AG04450 (cell line): ENCODE measurements at regions of chr1 and their contacts with region 1.

Region 1: DNA sequence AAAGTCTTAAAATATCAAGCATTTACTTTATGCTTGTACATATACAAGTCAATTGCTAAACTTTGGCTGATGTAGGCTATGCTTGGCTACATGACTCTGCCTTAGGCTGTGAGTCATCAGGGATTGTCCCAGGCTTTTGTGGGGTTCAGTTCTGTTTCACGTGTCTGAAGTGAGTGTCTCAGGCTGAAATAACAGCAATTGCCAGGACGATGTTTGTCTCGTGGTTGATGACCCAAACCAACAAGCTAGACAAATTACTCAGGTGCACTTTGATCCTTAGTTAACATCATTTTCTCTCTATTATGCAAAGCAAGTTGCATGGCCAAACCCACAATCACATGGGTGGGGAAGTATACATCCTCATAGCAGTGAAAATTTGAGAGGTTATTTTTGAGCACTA is 410.1 kb downstream of the BRINP3 start:
- DNase-seq: peak; percentile 16
- H3K4me3 ChIP-seq: no peak overlapping the region
- H3K27ac ChIP-seq: no peak overlapping the region
- H3K27me3 ChIP-seq: no peaks in the 10 kb centered on the region
- CTCF ChIP-seq: no peak

Region 2: GRCh38 chr1:190140644-190141043 is 73.1 kb after region 1 on chr1:
- CTCF ChIA-PET with region 1: no interaction called
- POLR2A ChIA-PET with region 1: no interaction called
- DNase-seq: no peak
- H3K4me3 ChIP-seq: no peak overlapping the region
- H3K27ac ChIP-seq: no peak overlapping the region
- H3K27me3 ChIP-seq: no peaks in the 10 kb centered on the region
- CTCF ChIP-seq: no peak

Region 3: DNA sequence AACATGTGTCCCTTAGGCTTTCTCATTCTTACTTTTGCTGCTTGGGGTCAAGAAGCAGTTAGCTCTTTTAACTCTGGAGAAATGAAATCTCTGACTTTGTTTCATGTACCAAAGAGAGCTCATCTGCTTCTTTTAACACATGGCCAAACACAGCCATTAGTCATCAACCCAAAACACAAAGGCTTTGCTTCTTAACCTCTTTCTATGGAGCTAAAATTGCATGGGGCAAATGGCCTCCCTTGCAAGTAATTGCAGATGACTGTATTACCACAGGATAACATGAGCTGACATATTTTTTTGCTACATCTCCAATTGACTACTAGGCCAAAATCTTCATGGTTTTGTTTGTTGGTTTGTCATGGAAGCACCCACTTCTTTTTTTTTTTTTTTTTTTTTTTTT is 109.2 kb after region 1 on chr1:
- CTCF ChIA-PET with region 1: no interaction called
- POLR2A ChIA-PET with region 1: interaction called, 14 read pairs
- DNase-seq: no peak
- H3K4me3 ChIP-seq: no peak overlapping the region
- H3K27ac ChIP-seq: no peak overlapping the region
- H3K27me3 ChIP-seq: no peaks in the 10 kb centered on the region
- CTCF ChIP-seq: no peak